ENCODE measurements at regions of chr3 and their contacts with region 1.

Region 1: DNA sequence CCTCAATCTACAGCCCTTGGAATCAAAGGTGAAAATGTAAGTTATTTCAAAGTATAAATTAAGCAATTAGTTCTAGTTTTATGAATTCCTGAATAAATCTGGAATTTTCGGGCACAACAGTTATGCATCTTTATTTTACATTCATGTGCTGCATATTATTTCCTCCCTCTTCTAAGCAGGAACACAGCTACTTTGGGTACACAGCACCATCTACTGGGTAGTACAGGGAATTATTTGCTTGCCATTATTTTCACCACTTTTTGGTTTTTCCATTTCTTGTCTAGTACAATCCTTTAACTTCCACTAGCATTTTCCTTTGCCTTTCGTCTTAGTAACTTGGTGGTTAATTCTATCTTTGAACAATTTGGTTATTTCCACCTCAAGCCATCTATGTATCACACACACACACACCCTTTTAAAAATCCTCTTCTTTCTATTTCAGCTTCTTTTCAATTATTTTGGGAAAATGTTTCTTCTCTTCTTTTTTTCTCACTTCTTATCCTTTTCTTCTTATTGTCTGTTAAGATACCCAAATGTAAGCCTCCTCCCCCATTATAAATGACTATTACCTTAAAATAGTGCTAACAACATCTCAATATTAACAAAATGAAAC is 451.0 kb downstream of the MFSD1 start:
- DNase-seq: peak; percentile 80
- H3K4me3 ChIP-seq: no peak overlapping the region
- H3K27ac ChIP-seq: no peak overlapping the region
- H3K4me1 ChIP-seq: peaks cover 6% of the 10 kb centered on the region
- H3K27me3 ChIP-seq: peaks cover 0 to 6% of the 10 kb centered on the region in 2 experiments
- CTCF ChIP-seq: peak; percentile 53 to 57
- POLR2A ChIP-seq: no peak

Region 2: GRCh38 chr3:158790901-158791589 is 461.8 kb before region 1 on chr3:
- CTCF ChIA-PET with region 1: interaction called, 96 read pairs
- POLR2A ChIA-PET with region 1: no interaction called
- dilution Hi-C with region 1: no loop called
- intact Hi-C with region 1: loop called (anchors 1 kb)
- DNase-seq: peak; percentile 71
- H3K4me3 ChIP-seq: peak overlapping the region in 1 of 3 experiments; percentile 3
- H3K27ac ChIP-seq: no peak overlapping the region
- H3K4me1 ChIP-seq: peaks cover 8% of the 10 kb centered on the region
- H3K27me3 ChIP-seq: no peaks in the 10 kb centered on the region
- CTCF ChIP-seq: peak; percentile 67 to 72
- POLR2A ChIP-seq: no peak

Region 3: DNA sequence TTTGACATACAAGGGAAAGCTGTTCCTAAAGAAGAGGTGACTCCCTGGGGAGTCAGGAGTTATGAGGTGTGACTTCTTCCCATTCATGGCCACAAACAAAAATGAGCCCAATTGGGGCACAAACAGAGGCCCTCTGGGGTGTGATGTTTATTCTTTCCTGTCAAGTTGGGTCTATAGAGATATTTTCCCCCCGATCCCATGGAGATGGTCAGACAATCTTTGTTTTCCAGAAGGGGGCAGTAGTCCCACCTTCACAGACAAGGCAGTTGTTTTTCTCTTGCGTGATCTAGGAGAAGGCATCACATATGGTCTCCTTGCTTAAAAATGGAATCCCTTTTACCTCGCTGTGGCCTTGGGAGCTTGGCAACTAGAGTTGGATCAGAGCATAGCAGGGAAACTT is 340.7 kb before region 1 on chr3:
- CTCF ChIA-PET with region 1: interaction called, 135 read pairs
- POLR2A ChIA-PET with region 1: no interaction called
- dilution Hi-C with region 1: loop called (anchors 25 kb)
- intact Hi-C with region 1: no loop called
- DNase-seq: peak; percentile 4
- H3K4me3 ChIP-seq: no peak overlapping the region
- H3K27ac ChIP-seq: no peak overlapping the region
- H3K4me1 ChIP-seq: no peaks in the 10 kb centered on the region
- H3K27me3 ChIP-seq: no peaks in the 10 kb centered on the region
- CTCF ChIP-seq: peak in 1 of 2 donors; percentile 21
- POLR2A ChIP-seq: no peak

Region 4: DNA sequence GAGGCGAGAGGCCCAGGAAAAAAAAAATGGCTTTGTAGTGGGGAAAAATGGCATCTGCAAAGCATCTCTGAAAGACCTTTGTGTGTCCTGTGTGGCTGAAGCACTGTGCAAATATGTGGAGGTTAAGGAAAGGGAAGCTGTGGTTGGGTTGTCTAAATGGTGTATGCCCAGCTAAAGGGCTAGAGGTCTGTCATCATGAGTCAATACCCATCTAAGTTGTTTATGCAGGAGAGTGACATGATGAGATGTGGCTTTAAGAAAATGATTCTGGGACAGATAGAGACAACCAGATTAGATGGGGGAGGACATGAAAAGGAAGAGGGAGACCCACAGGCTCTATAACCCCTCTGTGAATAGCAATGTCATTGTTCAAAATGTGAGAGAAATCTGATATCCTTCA is 170.4 kb before region 1 on chr3:
- CTCF ChIA-PET with region 1: interaction called, 14 read pairs
- POLR2A ChIA-PET with region 1: no interaction called
- dilution Hi-C with region 1: no loop called
- intact Hi-C with region 1: loop called (anchors 1 kb)
- DNase-seq: peak; percentile 61
- H3K4me3 ChIP-seq: no peak overlapping the region
- H3K27ac ChIP-seq: peak overlapping the region; percentile 52
- H3K4me1 ChIP-seq: peaks cover 10% of the 10 kb centered on the region
- H3K27me3 ChIP-seq: no peaks in the 10 kb centered on the region
- CTCF ChIP-seq: no peak
- POLR2A ChIP-seq: no peak

Region 5: GRCh38 chr3:159130108-159130507 is 122.8 kb before region 1 on chr3:
- CTCF ChIA-PET with region 1: interaction called, 18 read pairs
- POLR2A ChIA-PET with region 1: no interaction called
- dilution Hi-C with region 1: no loop called
- intact Hi-C with region 1: loop called (anchors 1 kb)
- DNase-seq: no peak
- H3K4me3 ChIP-seq: no peak overlapping the region
- H3K27ac ChIP-seq: no peak overlapping the region
- H3K4me1 ChIP-seq: peaks cover 14% of the 10 kb centered on the region
- H3K27me3 ChIP-seq: no peaks in the 10 kb centered on the region
- CTCF ChIP-seq: peak in 1 of 2 donors; percentile 14
- POLR2A ChIP-seq: no peak

Region 6: GRCh38 chr3:159169828-159170227 is 83.0 kb before region 1 on chr3:
- CTCF ChIA-PET with region 1: interaction called, 11 read pairs
- POLR2A ChIA-PET with region 1: no interaction called
- dilution Hi-C with region 1: no loop called
- intact Hi-C with region 1: loop called (anchors 1 kb)
- DNase-seq: peak; percentile 82
- H3K4me3 ChIP-seq: no peak overlapping the region
- H3K27ac ChIP-seq: peak overlapping the region; percentile 87
- H3K4me1 ChIP-seq: peaks cover 32% of the 10 kb centered on the region
- H3K27me3 ChIP-seq: no peaks in the 10 kb centered on the region
- CTCF ChIP-seq: no peak
- POLR2A ChIP-seq: peak; percentile 71

Region 7: GRCh38 chr3:159239059-159239458 is 13.8 kb before region 1 on chr3:
- CTCF ChIA-PET with region 1: interaction called, 11 read pairs
- POLR2A ChIA-PET with region 1: no interaction called
- dilution Hi-C with region 1: no loop called
- intact Hi-C with region 1: no loop called
- DNase-seq: no peak
- H3K4me3 ChIP-seq: no peak overlapping the region
- H3K27ac ChIP-seq: no peak overlapping the region
- H3K4me1 ChIP-seq: no peaks in the 10 kb centered on the region
- H3K27me3 ChIP-seq: peaks cover 0 to 2% of the 10 kb centered on the region in 2 experiments
- CTCF ChIP-seq: no peak
- POLR2A ChIP-seq: no peak

Region 8: GRCh38 chr3:159322322-159322939 is 69.6 kb after region 1 on chr3:
- CTCF ChIA-PET with region 1: no interaction called
- POLR2A ChIA-PET with region 1: no interaction called
- dilution Hi-C with region 1: no loop called
- intact Hi-C with region 1: no loop called
- DNase-seq: no peak
- H3K4me3 ChIP-seq: no peak overlapping the region
- H3K27ac ChIP-seq: no peak overlapping the region
- H3K4me1 ChIP-seq: no peaks in the 10 kb centered on the region
- H3K27me3 ChIP-seq: no peaks in the 10 kb centered on the region
- CTCF ChIP-seq: peak; percentile 54 to 61
- POLR2A ChIP-seq: no peak

Region 9: GRCh38 chr3:159340877-159341500 is 88.1 kb after region 1 on chr3:
- CTCF ChIA-PET with region 1: no interaction called
- POLR2A ChIA-PET with region 1: no interaction called
- dilution Hi-C with region 1: no loop called
- intact Hi-C with region 1: no loop called
- DNase-seq: no peak
- H3K4me3 ChIP-seq: no peak overlapping the region
- H3K27ac ChIP-seq: no peak overlapping the region
- H3K4me1 ChIP-seq: no peaks in the 10 kb centered on the region
- H3K27me3 ChIP-seq: no peaks in the 10 kb centered on the region
- CTCF ChIP-seq: no peak
- POLR2A ChIP-seq: no peak